GM12878 (cell line): ENCODE measurements at regions of chr2 and their contacts with region 1.

Region 1: GRCh38 chr2:11457935-11458334 is 8.0 kb downstream of the E2F6 start:
- DNase-seq: no peak
- ATAC-seq: peak; percentile 48
- H3K4me3 ChIP-seq: no peak overlapping the region
- H3K27ac ChIP-seq: peak overlapping the region; percentile 13
- H3K4me1 ChIP-seq: peaks cover 4% of the 10 kb centered on the region
- H3K27me3 ChIP-seq: no peaks in the 10 kb centered on the region
- CTCF ChIP-seq: no peak
- EP300 ChIP-seq: no peak
- POLR2A ChIP-seq: no peak
- RAD21 ChIP-seq: no peak

Region 2: DNA sequence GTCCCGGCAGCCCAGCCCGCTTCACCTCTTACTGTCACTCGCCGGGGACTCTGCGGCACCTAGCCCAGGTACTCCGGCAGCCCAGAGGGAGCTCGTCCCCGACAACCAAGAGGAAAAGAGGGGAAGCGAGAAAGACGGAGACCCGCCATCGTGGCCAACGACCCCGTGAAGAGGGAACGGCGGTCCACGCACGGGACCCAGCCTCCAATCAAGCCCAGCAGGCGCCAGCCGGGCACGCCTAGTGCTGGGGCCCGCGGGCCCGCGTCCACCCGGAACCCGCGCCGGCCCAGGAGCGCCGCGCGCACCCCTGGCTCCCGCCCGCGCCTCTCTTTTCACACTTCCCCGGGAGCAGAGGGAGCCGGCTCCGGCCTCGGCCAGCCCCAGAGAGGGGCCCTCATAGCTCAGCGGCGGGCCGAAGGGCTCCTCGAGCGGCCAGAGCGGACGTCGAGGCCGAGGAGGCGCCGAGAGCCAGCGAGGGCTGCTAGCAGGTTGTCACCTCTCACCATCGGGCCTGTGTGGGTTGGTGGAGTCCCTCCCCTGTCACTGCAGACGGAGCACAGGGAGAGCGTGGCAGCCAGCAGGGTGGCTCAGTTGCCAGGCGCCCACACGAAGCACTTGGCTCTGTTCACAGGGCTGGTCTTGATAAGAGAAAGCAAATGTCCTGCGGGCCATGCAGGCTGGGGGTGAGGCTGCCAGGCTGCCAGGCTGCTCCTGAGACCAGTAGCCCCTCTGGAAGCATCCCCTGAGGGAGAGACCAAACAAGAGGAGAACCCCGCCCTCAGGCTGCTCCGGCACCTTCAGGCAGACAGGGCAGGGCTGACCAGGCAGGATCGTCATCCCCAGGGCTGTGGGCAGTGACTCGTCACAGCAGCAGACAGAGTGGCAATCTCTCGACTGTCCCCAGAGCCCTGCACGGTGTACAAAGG is 1451.4 kb before region 1 on chr2:
- CTCF ChIA-PET with region 1: no interaction called
- POLR2A ChIA-PET with region 1: no interaction called
- RAD21 ChIA-PET with region 1: no interaction called
- SMC1A ChIA-PET with region 1: no interaction called
- in situ Hi-C with region 1: no loop called
- intact Hi-C with region 1: no loop called
- DNase-seq: no peak
- ATAC-seq: no peak
- H3K4me3 ChIP-seq: no peak overlapping the region
- H3K27ac ChIP-seq: no peak overlapping the region
- H3K4me1 ChIP-seq: no peaks in the 10 kb centered on the region
- H3K27me3 ChIP-seq: no peaks in the 10 kb centered on the region
- CTCF ChIP-seq: no peak
- EP300 ChIP-seq: no peak
- POLR2A ChIP-seq: no peak
- RAD21 ChIP-seq: no peak

Region 3: GRCh38 chr2:11446733-11447248 is 11.1 kb before region 1 on chr2:
- CTCF ChIA-PET with region 1: interaction called, 21 read pairs
- POLR2A ChIA-PET with region 1: interaction called, 5 read pairs
- RAD21 ChIA-PET with region 1: no interaction called
- SMC1A ChIA-PET with region 1: no interaction called
- in situ Hi-C with region 1: no loop called
- intact Hi-C with region 1: no loop called
- DNase-seq: no peak
- ATAC-seq: peak; percentile 76
- H3K4me3 ChIP-seq: no peak overlapping the region
- H3K27ac ChIP-seq: no peak overlapping the region
- H3K4me1 ChIP-seq: no peaks in the 10 kb centered on the region
- H3K27me3 ChIP-seq: no peaks in the 10 kb centered on the region
- CTCF ChIP-seq: peak; percentile 63 to 74 (median 67)
- EP300 ChIP-seq: no peak
- POLR2A ChIP-seq: no peak
- RAD21 ChIP-seq: peak; percentile 81